ENCODE measurements at regions of chr12 and their contacts with region 1.

Region 1: DNA sequence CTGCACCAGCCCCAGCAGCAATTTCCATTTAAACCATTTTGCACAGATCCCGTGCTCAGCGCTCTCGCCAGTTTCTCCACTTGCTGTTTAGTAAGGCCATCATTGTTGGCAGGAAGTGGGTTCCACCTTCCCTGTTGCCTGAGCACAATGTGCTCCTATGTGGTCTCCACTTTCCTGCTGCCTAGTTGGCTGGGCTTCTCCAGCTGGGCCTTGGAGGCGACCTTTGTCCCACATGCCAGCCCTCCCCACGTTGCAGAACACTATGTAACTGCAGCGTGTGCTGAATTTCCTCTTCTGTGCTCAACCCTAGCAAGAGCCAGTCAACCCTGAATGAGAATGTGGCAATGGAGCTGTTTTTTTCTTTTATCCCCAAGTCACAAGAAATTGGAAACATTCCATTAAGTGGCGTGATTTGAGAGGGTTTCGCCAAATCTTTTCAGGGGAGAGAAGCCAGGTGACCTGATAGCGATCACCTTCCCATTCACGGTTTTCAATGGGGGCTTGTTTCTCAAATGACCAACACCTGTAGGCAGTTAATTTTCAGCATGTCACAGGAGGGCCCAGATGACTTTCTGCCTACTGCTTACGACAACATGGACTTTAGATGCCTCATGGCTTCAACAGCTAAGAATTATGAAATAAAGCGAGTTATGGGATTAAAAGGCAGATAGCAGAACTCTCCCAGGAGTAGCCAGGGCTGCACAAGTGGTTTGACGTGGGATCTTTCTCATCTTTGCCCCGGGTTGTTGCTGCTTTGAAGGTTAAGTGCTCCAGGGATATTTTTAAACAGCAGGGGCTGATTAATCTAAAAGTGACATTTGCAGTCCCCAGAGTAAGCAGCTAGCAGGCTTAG is at the start of gene ACACB:
- DNase-seq: no peak
- total RNA-seq, gene ACACB: 64.5 TPM

Region 2: GRCh38 chr12:109157986-109158385 is 42.0 kb after region 1 on chr12:
- intact Hi-C with region 1: loop called (anchors 2 kb)
- DNase-seq: no peak

Measured in cardiac septum (tissue), 1 donor.